ENCODE measurements at regions of chr19 and their contacts with region 1.

Region 1: DNA sequence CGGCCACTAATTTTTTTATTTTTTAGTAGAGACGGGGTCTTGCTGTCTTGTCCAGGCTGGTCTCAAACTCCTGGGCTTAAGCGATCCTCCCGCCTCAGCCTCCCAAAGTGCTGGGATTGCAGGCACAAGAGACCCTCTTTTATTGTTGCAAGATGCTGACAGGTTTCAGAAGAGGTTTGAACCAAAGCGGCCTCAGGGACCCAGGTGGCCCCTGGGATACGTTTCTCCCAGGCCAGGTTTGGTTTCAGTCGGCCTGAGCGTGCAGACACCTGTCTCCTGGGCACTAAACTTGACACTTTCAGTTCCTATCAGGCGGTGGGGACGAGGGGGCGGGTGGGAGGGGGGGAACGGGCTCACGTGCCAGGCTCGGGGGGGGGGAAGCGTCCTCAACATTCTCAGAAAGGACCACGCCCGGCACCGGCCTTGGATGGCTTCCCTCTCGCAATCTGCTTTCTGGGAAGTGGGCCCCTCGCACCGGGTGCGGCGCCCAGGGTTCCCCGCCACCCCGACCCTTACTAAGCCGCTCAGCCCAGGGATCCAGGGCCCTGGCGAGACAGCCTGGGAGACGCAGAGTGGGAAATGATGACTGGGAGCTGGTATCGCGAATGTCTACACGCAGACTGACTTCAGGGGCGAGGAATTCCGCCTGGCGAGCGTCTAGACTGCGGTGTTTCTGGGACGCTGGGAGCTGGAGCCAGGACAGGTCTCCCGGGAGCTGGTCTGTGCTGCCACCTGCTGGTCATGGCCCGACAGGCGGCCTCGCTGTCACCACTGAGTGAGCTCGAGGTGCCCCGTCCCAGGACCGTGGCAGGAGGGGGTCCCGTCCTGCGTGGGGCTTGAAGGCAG is 91.6 kb downstream of the GNG7 start:
- DNase-seq: peak; percentile 59
- ATAC-seq: peak; percentile 94
- H3K4me3 ChIP-seq: peak overlapping the region; percentile 36 to 51
- H3K27ac ChIP-seq: no peak overlapping the region
- H3K4me1 ChIP-seq: peaks cover 8 to 21% of the 10 kb centered on the region in 2 experiments; a peak in 3 of 4 replicates
- H3K27me3 ChIP-seq: no peaks in the 10 kb centered on the region
- CTCF ChIP-seq: peak; percentile 90 to 95 (median 91)
- POLR2A ChIP-seq: no peak
- RAD21 ChIP-seq: peak; percentile 99

Region 2: DNA sequence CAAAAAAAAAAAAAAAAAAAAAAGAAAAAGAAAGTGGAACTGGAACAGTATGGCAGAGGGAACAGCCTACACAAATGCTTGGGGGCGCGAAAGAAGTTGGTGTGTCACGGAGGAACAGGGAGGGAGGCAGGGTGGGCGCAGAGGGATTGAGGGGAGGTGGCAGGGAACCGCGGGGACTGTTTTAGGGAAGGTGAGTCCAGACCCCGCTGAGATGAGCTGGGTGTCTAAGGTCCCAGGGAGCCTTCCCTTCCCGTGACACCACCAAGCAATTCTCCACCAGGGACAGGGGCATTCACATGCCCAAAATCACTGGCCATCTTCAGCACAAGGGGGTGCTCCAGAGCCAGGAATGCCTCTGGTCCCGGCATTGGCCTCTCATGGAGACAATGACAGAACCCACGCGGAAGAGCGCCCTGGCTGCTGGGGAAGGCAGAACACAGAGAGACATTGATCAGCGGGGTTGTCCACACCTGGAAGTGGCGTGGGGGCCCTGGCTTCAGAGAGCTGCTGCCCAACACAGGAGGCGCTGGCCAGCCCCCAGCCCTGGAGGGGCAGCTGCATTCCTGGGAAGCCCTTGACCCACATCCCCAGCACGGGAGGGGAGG is 335.8 kb before region 1 on chr19:
- CTCF ChIA-PET with region 1: interaction called, 3 read pairs
- POLR2A ChIA-PET with region 1: no interaction called
- RAD21 ChIA-PET with region 1: no interaction called
- intact Hi-C with region 1: loop called (anchors 5 kb)
- DNase-seq: no peak
- ATAC-seq: peak; percentile 68
- H3K4me3 ChIP-seq: no peak overlapping the region
- H3K27ac ChIP-seq: peak overlapping the region; percentile 24; the same call in 1 of the 2 replicates
- H3K4me1 ChIP-seq: peaks cover 9 to 52% of the 10 kb centered on the region in 2 experiments
- H3K27me3 ChIP-seq: no peaks in the 10 kb centered on the region
- CTCF ChIP-seq: peak; percentile 58 to 78 (median 69)
- POLR2A ChIP-seq: no peak
- RAD21 ChIP-seq: peak; percentile 88

Region 3: GRCh38 chr19:2408247-2408646 is 202.6 kb before region 1 on chr19:
- CTCF ChIA-PET with region 1: no interaction called
- POLR2A ChIA-PET with region 1: no interaction called
- RAD21 ChIA-PET with region 1: no interaction called
- intact Hi-C with region 1: no loop called
- DNase-seq: no peak
- ATAC-seq: no peak
- H3K4me3 ChIP-seq: no peak overlapping the region
- H3K27ac ChIP-seq: no peak overlapping the region
- H3K4me1 ChIP-seq: peaks cover 0 to 1% of the 10 kb centered on the region in 2 experiments; a peak in 1 of 4 replicates
- H3K27me3 ChIP-seq: no peaks in the 10 kb centered on the region
- CTCF ChIP-seq: no peak
- POLR2A ChIP-seq: no peak
- RAD21 ChIP-seq: no peak

Region 4: GRCh38 chr19:2636897-2637683 is 26.2 kb after region 1 on chr19:
- CTCF ChIA-PET with region 1: interaction called, 13 read pairs
- POLR2A ChIA-PET with region 1: no interaction called
- RAD21 ChIA-PET with region 1: interaction called in 1 of 2 experiments, 3 read pairs
- intact Hi-C with region 1: no loop called
- DNase-seq: no peak
- ATAC-seq: peak; percentile 86
- H3K4me3 ChIP-seq: no peak overlapping the region
- H3K27ac ChIP-seq: no peak overlapping the region
- H3K4me1 ChIP-seq: peaks cover 5 to 15% of the 10 kb centered on the region in 2 experiments; a peak in 2 of 4 replicates
- H3K27me3 ChIP-seq: no peaks in the 10 kb centered on the region
- CTCF ChIP-seq: peak; percentile 87 to 90 (median 89)
- POLR2A ChIP-seq: no peak
- RAD21 ChIP-seq: peak; percentile 91

Region 5: DNA sequence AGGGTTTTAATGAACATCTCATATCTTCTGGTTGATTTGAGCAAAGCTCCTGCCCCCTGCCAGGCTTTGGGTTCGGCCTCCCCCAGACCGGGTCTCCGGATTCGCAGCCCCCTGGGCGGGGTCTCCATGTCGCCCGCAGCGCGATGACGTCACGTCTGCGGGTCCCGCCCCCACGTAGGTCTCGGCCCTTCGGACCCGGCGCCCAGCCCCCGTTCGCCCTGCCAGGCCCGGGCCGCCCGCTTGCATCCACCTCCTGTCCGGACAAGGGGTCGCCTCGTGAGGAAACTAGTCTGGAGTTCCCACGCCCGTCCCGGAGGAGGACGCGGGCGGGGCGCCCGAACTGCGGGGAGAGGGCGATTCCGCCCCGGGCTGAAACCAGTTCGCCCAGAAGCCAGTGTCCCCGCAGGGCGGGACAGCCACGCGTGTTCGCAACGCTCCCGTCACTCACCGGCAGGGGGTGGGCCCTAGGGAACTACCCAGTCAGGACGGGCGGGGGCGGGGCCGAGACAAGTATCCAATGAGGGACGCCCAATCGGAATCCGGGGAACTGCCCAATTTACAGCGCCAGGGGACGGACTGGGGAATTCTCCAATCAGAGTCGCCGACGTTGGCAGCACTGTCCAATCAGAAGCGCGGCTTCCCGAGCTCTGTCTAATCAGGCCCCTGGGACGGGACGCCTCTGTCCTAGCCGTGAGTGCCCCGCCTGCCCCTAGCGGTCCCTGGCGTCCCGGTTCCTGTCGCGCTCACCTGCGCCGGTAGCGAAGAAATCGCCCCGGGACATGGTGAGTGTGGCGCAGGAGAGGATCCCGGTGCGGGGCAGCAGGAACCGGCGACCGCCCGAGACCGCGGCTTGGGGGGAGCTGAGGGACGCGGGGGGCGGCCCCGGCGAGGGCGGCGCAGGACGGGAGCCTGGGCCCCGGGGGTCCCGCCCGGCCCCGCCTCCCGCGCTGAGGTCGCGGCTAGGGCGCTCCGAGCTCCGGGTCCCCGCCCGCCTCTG is 230.2 kb after region 1 on chr19 and contains the start of gene ZNF555:
- CTCF ChIA-PET with region 1: no interaction called
- POLR2A ChIA-PET with region 1: no interaction called
- RAD21 ChIA-PET with region 1: no interaction called
- intact Hi-C with region 1: no loop called
- DNase-seq: peak; percentile 98
- ATAC-seq: peak; percentile 99
- H3K4me3 ChIP-seq: peak within 1 kb of the TSS; percentile 53 to 64
- H3K27ac ChIP-seq: peak within 1 kb of the TSS; percentile 67; the same call in 1 of the 2 replicates
- H3K4me1 ChIP-seq: peaks cover 0 to 12% of the 10 kb centered on the region in 2 experiments; a peak in 2 of 4 replicates
- H3K27me3 ChIP-seq: no peaks in the 10 kb centered on the region
- CTCF ChIP-seq: peak in 2 of 3 experiments; percentile 33 to 56; a peak in 3 of 6 replicates
- POLR2A ChIP-seq: no peak
- RAD21 ChIP-seq: no peak
- total RNA-seq, gene ZNF555: 4.5 TPM

Measured in HCT116 (cell line).